MCF 10A (cell line): ENCODE measurements at regions of chr15 and their contacts with region 1.

Region 1: DNA sequence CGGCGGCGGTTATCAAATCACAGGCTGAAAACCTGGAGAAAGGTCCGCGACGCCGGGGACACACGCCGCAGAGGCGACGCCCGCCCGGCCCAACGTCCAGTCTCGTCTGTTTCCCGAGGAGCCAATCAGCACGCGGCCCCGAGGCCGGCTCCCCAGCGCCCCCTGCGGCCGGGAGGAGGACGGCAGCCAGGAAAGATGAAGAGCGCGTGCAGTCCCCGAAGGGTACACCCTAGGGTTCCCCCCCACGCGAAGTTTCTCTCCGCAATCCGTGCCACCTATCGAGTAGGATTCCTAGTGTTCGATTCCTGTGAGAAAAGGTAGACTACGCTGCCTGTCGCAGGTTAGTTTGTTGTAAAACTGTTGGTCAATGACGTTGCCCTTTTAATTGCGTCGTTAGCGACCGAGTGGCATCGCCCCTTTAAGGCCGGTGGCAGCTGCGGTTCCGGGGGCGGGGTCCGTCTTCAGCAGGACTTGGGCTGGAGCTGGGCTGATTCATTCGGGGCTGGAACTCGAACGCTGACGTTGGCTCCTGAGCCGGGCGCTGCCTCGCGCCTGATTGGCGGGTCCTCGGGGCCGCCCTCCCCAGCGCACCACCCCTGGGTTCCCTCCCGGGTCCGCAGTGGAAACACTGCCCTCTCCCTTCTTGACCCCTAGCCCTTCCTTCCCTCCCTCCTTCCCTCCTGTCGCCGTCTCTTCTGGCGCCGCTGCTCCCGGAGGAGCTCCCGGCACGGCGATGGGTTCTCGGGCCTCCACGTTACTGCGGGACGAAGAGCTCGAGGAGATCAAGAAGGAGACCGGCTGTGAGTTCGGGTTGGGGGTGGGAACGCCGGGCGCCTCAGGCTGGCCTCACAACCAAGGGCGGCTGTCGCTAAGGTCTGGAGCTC is at the starts of genes CHP1 and EXD1:
- DNase-seq: peak; percentile 98
- H3K4me3 Mint-ChIP-seq: peak within 1 kb of the TSS; percentile 95
- H3K27ac Mint-ChIP-seq: peak within 1 kb of the TSS; percentile 93
- H3K4me1 Mint-ChIP-seq: peaks cover 13% of the 10 kb centered on the region
- H3K27me3 Mint-ChIP-seq: no peaks in the 10 kb centered on the region
- CTCF ChIP-seq: peak; percentile 98
- total RNA-seq, gene CHP1: 70.4 and 91.1 TPM in 2 replicates
- total RNA-seq, gene EXD1: 0.12 and 0.37 TPM in 2 replicates

Region 2: GRCh38 chr15:40578892-40579291 is 652.0 kb before region 1 on chr15:
- CTCF ChIA-PET with region 1: no interaction called
- POLR2A ChIA-PET with region 1: no interaction called
- intact Hi-C with region 1: no loop called
- DNase-seq: no peak
- H3K4me3 Mint-ChIP-seq: no peak overlapping the region
- H3K27ac Mint-ChIP-seq: no peak overlapping the region
- H3K4me1 Mint-ChIP-seq: no peaks in the 10 kb centered on the region
- H3K27me3 Mint-ChIP-seq: no peaks in the 10 kb centered on the region
- CTCF ChIP-seq: no peak

Region 3: DNA sequence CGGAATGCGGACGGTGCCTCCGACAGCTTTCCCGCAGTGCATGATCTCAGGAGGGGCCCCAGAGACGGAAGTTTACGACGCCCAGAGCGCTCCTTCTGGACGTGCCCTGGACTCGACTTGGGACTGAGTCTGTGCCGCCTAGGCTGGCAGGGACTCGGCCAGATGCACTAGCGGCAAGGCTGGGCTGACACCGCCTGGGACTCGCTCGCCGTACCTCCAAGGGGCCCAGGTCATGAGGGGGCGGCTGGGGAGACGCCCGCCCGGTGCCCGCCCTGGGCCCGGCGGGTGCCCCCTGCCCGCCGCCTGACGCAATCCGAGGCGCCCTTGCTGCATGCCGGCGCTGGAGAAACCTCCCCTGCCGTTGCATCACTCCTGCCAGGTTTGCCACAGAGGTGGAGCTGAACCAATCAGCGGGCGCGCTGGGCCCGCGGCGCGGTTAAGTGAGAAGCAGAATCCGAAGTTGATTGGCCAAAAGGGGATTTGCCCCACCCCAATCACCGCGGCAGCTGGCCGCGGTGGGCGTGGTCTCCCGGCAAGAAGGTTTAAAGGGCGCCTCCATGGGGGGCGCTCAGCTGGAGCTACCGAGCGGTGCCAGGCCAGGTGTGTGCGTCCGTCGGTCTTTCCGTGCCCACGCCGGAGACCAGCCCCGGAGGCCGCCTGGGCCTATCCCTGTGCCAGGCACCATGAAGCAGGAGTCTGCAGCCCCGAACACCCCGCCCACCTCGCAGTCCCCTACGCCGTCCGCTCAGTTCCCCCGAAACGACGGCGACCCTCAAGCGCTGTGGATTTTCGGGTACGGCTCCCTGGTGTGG is 277.8 kb before region 1 on chr15 and contains the start of gene CHAC1:
- CTCF ChIA-PET with region 1: no interaction called
- POLR2A ChIA-PET with region 1: no interaction called
- intact Hi-C with region 1: no loop called
- DNase-seq: peak; percentile 98
- H3K4me3 Mint-ChIP-seq: peak within 1 kb of the TSS; percentile 87
- H3K27ac Mint-ChIP-seq: peak within 1 kb of the TSS; percentile 83
- H3K4me1 Mint-ChIP-seq: peaks cover 25% of the 10 kb centered on the region
- H3K27me3 Mint-ChIP-seq: no peaks in the 10 kb centered on the region
- CTCF ChIP-seq: no peak
- total RNA-seq, gene CHAC1: 35.5 and 49.4 TPM in 2 replicates

Region 4: DNA sequence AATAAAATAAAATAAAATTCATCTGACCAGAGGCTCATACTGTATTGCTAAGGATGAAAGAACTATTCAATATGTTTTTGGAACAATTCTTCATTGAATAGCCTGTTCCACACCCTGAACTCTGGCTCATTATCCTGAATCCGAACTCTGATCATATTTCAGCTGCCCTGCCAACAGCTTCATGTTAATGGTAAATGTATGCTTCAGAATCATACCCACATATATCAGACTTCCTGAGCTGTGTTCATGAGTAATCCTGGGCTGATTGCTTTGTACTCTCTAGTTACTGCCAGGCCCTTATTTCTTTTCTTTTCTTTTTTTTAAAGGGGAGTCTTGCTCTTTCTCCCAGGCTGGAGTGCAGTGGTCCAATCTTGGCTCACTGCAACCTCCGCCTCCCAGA is 126.7 kb before region 1 on chr15:
- CTCF ChIA-PET with region 1: no interaction called
- POLR2A ChIA-PET with region 1: no interaction called
- intact Hi-C with region 1: no loop called
- DNase-seq: peak; percentile 18
- H3K4me3 Mint-ChIP-seq: no peak overlapping the region
- H3K27ac Mint-ChIP-seq: no peak overlapping the region
- H3K4me1 Mint-ChIP-seq: peaks cover 5% of the 10 kb centered on the region
- H3K27me3 Mint-ChIP-seq: no peaks in the 10 kb centered on the region
- CTCF ChIP-seq: no peak

Region 5: DNA sequence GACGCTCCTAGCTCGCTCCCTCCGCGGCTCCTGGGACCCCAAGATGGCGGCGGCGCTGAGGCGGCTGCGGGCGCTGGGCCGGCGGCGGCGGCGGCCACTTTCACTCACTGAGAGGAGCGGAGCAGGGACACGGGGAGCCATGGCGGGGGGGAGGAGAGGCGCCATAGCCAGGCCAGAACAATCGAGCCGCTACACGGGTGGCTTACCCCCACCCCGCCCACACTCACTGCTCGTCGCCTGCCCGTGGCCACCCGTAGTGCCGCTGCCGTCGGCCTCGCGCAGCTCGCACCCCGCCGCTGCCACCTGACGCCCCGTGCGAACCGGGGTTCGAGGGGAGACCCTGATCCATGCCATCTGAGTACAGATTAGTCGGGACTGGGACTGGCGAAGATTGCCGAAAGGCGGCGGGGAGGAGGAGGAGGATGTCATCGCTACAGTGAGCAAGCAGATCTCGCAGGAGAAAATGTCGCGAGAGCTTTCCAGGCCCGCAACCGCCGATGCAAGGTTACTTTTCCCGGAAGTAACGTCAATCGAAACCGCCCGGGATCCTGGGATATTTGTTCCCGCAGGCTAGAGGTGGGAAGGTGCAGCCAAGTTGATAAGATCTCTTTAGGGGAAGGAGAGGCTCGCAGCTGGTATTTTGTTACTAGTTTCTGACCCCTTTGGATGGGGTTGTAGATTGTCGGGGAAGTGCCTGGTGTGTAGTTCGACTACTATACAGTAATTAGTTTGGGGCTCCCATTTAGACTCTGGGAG is 114.6 kb before region 1 on chr15 and contains the start of gene INO80:
- CTCF ChIA-PET with region 1: interaction called, 7 read pairs
- POLR2A ChIA-PET with region 1: interaction called, 10 read pairs
- intact Hi-C with region 1: no loop called
- DNase-seq: peak; percentile 99
- H3K4me3 Mint-ChIP-seq: peak within 1 kb of the TSS; percentile 88
- H3K27ac Mint-ChIP-seq: peak within 1 kb of the TSS; percentile 99
- H3K4me1 Mint-ChIP-seq: no peaks in the 10 kb centered on the region
- H3K27me3 Mint-ChIP-seq: no peaks in the 10 kb centered on the region
- CTCF ChIP-seq: no peak
- total RNA-seq, gene INO80: 32.3 and 33.8 TPM in 2 replicates

Region 6: GRCh38 chr15:41207687-41208448 is 23.0 kb before region 1 on chr15:
- CTCF ChIA-PET with region 1: interaction called, 4 read pairs
- POLR2A ChIA-PET with region 1: interaction called, 14 read pairs
- intact Hi-C with region 1: no loop called
- DNase-seq: peak; percentile 77
- H3K4me3 Mint-ChIP-seq: peak overlapping the region; percentile 35
- H3K27ac Mint-ChIP-seq: peak overlapping the region; percentile 85
- H3K4me1 Mint-ChIP-seq: peaks cover 11% of the 10 kb centered on the region
- H3K27me3 Mint-ChIP-seq: no peaks in the 10 kb centered on the region
- CTCF ChIP-seq: no peak

Region 7: GRCh38 chr15:41251411-41251810 is 20.5 kb after region 1 on chr15:
- CTCF ChIA-PET with region 1: interaction called, 9 read pairs
- POLR2A ChIA-PET with region 1: interaction called, 91 read pairs
- intact Hi-C with region 1: loop called (anchors 1 kb)
- DNase-seq: no peak
- H3K4me3 Mint-ChIP-seq: no peak overlapping the region
- H3K27ac Mint-ChIP-seq: no peak overlapping the region
- H3K4me1 Mint-ChIP-seq: peaks cover 13% of the 10 kb centered on the region
- H3K27me3 Mint-ChIP-seq: no peaks in the 10 kb centered on the region
- CTCF ChIP-seq: no peak

Region 8: GRCh38 chr15:41258706-41259471 is 28.0 kb after region 1 on chr15:
- CTCF ChIA-PET with region 1: interaction called, 4 read pairs
- POLR2A ChIA-PET with region 1: interaction called, 21 read pairs
- intact Hi-C with region 1: loop called (anchors 2 kb)
- DNase-seq: peak; percentile 61
- H3K4me3 Mint-ChIP-seq: no peak overlapping the region
- H3K27ac Mint-ChIP-seq: no peak overlapping the region
- H3K4me1 Mint-ChIP-seq: peaks cover 17% of the 10 kb centered on the region
- H3K27me3 Mint-ChIP-seq: no peaks in the 10 kb centered on the region
- CTCF ChIP-seq: no peak

Region 9: GRCh38 chr15:41283653-41284426 is 52.9 kb after region 1 on chr15:
- CTCF ChIA-PET with region 1: interaction called, 3 read pairs
- POLR2A ChIA-PET with region 1: interaction called, 76 read pairs
- intact Hi-C with region 1: loop called (anchors 2 kb)
- DNase-seq: peak; percentile 99
- H3K4me3 Mint-ChIP-seq: peak overlapping the region; percentile 95
- H3K27ac Mint-ChIP-seq: peak overlapping the region; percentile 95
- H3K4me1 Mint-ChIP-seq: peaks cover 28% of the 10 kb centered on the region
- H3K27me3 Mint-ChIP-seq: no peaks in the 10 kb centered on the region
- CTCF ChIP-seq: no peak

Region 10: GRCh38 chr15:41331833-41332787 is 101.2 kb after region 1 on chr15 and contains the start of gene OIP5:
- CTCF ChIA-PET with region 1: interaction called, 5 read pairs
- POLR2A ChIA-PET with region 1: interaction called, 15 read pairs
- intact Hi-C with region 1: loop called (anchors 1 kb)
- DNase-seq: peak; percentile 100
- H3K4me3 Mint-ChIP-seq: peak within 1 kb of the TSS; percentile 98
- H3K27ac Mint-ChIP-seq: peak within 1 kb of the TSS; percentile 93
- H3K4me1 Mint-ChIP-seq: peaks cover 5% of the 10 kb centered on the region
- H3K27me3 Mint-ChIP-seq: no peaks in the 10 kb centered on the region
- CTCF ChIP-seq: peak; percentile 65
- total RNA-seq, gene OIP5: 2.9 and 5.7 TPM in 2 replicates